ENCODE measurements at regions of chr6 and their contacts with region 1.

Region 1: GRCh38 chr6:13548500-13549210 is 25.7 kb upstream of the SIRT5 start:
- DNase-seq: no peak
- H3K4me3 ChIP-seq: no peak overlapping the region
- H3K27ac ChIP-seq: no peak overlapping the region
- H3K4me1 ChIP-seq: no peaks in the 10 kb centered on the region
- H3K27me3 ChIP-seq: no peaks in the 10 kb centered on the region
- CTCF ChIP-seq: no peak

Region 2: DNA sequence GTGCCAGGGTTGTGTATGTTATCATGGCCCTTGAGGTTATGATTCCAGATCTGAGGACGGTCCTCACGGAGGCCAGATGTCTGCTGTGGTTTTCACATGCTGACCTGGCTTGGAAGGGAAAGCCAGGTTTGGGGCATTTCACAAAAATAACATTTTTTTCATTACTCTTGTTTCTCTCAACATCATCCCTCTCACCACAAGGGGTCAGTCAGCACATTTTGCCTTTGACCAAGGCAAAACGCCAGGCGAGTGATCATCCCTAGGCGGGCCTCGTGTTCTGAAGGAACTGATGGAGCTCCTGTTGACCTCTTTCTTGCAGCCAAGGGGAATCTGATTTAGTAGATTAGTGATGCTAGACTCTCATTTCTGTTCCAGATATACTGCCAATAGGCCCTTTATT is 353.8 kb before region 1 on chr6:
- CTCF ChIA-PET with region 1: no interaction called
- POLR2A ChIA-PET with region 1: no interaction called
- intact Hi-C with region 1: loop called (anchors 10 kb)
- DNase-seq: peak; percentile 57
- H3K4me3 ChIP-seq: no peak overlapping the region
- H3K27ac ChIP-seq: no peak overlapping the region
- H3K4me1 ChIP-seq: no peaks in the 10 kb centered on the region
- H3K27me3 ChIP-seq: peaks cover 4% of the 10 kb centered on the region
- CTCF ChIP-seq: peak; percentile 55

Region 3: GRCh38 chr6:13357551-13358075 is 191.0 kb before region 1 on chr6:
- CTCF ChIA-PET with region 1: no interaction called
- POLR2A ChIA-PET with region 1: interaction called, 12 read pairs
- intact Hi-C with region 1: no loop called
- DNase-seq: no peak
- H3K4me3 ChIP-seq: no peak overlapping the region
- H3K27ac ChIP-seq: no peak overlapping the region
- H3K4me1 ChIP-seq: no peaks in the 10 kb centered on the region
- H3K27me3 ChIP-seq: no peaks in the 10 kb centered on the region
- CTCF ChIP-seq: no peak

Region 4: GRCh38 chr6:13560651-13561044 is 12.0 kb after region 1 on chr6:
- CTCF ChIA-PET with region 1: interaction called, 11 read pairs
- POLR2A ChIA-PET with region 1: no interaction called
- intact Hi-C with region 1: no loop called
- DNase-seq: peak; percentile 55
- H3K4me3 ChIP-seq: no peak overlapping the region
- H3K27ac ChIP-seq: no peak overlapping the region
- H3K4me1 ChIP-seq: no peaks in the 10 kb centered on the region
- H3K27me3 ChIP-seq: no peaks in the 10 kb centered on the region
- CTCF ChIP-seq: no peak

Measured in A673 (cell line).